B cell (primary cell): ENCODE measurements at regions of chr12 and their contacts with region 1.

Region 1: DNA sequence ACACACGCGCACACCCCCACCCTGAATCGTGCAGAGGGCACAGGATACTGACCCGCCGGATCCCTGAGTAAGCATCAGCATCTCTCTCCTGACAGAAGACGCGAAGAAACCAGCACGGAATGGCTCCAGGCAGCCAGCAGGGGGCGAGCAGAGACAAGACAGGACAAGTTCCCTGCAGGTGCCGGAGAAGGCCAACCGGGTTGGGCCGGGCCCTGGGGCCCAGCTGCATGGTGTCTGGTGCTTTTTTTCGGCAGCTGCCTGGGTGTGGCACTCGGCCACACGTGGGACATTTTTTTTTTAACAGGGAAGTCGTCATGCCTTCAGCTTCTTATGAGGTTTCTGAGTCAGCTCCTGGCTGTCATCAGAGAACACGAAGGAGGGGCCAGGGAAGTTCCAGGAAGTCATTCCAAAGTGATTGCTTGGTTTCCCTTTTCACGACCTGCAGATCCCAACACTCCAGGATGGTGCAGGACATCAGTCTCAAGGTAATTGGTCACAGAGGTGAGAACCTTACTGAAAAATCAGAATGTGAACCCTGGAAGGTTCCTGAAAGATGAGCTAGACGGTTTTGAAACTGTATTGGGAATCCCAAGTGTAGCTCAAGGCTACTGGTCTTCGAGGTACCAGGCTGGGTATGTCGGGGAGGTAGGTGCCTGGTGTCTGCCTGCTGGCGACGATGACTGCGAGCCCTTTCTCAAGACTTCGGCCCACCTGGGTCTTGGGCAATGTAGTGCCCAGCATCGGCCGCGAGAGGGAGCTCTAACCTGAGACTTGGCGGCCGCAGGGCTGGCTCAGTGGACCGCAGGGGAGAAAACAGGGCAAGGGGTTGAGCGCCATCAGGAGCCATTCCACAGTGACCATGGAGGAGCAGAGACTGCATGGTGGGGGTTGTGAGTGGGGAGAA is 190.8 kb upstream of the PRMT8 start:
- DNase-seq: peak; percentile 89
- ATAC-seq: peak; percentile 90
- H3K4me3 ChIP-seq: peak overlapping the region in 3 of 5 experiments; percentile 35 to 50 (median 39)
- H3K4me3 Mint-ChIP-seq: peak overlapping the region; percentile 79
- H3K27ac ChIP-seq: no peak overlapping the region
- H3K27ac Mint-ChIP-seq: peak overlapping the region; percentile 67
- H3K4me1 ChIP-seq: peaks cover 9 to 16% of the 10 kb centered on the region in 2 donors
- H3K4me1 Mint-ChIP-seq: peaks cover 13% of the 10 kb centered on the region
- H3K27me3 ChIP-seq: peaks cover 0 to 18% (median 0%) of the 10 kb centered on the region in 4 experiments
- H3K27me3 Mint-ChIP-seq: peaks cover 19% of the 10 kb centered on the region
- CTCF ChIP-seq: peak; percentile 81

Region 2: GRCh38 chr12:3275171-3276041 is 24.8 kb before region 1 on chr12:
- CTCF ChIA-PET with region 1: interaction called, 10 read pairs
- POLR2A ChIA-PET with region 1: no interaction called
- intact Hi-C with region 1: no loop called
- DNase-seq: peak; percentile 71
- ATAC-seq: peak; percentile 54
- H3K4me3 ChIP-seq: no peak overlapping the region
- H3K4me3 Mint-ChIP-seq: no peak overlapping the region
- H3K27ac ChIP-seq: no peak overlapping the region
- H3K27ac Mint-ChIP-seq: no peak overlapping the region
- H3K4me1 ChIP-seq: peaks cover 0 to 4% of the 10 kb centered on the region in 2 donors
- H3K4me1 Mint-ChIP-seq: no peaks in the 10 kb centered on the region
- H3K27me3 ChIP-seq: peaks cover 0 to 9% (median 0%) of the 10 kb centered on the region in 4 experiments
- H3K27me3 Mint-ChIP-seq: peaks cover 27% of the 10 kb centered on the region
- CTCF ChIP-seq: peak; percentile 90

Region 3: GRCh38 chr12:3313675-3314663 is 13.8 kb after region 1 on chr12:
- CTCF ChIA-PET with region 1: interaction called, 39 read pairs
- POLR2A ChIA-PET with region 1: no interaction called
- intact Hi-C with region 1: no loop called
- DNase-seq: peak; percentile 47
- ATAC-seq: peak; percentile 43
- H3K4me3 ChIP-seq: no peak overlapping the region
- H3K4me3 Mint-ChIP-seq: no peak overlapping the region
- H3K27ac ChIP-seq: no peak overlapping the region
- H3K27ac Mint-ChIP-seq: no peak overlapping the region
- H3K4me1 ChIP-seq: no peaks in the 10 kb centered on the region
- H3K4me1 Mint-ChIP-seq: no peaks in the 10 kb centered on the region
- H3K27me3 ChIP-seq: peaks cover 0 to 3% (median 0%) of the 10 kb centered on the region in 4 experiments
- H3K27me3 Mint-ChIP-seq: peaks cover 24% of the 10 kb centered on the region
- CTCF ChIP-seq: peak; percentile 19

Region 4: DNA sequence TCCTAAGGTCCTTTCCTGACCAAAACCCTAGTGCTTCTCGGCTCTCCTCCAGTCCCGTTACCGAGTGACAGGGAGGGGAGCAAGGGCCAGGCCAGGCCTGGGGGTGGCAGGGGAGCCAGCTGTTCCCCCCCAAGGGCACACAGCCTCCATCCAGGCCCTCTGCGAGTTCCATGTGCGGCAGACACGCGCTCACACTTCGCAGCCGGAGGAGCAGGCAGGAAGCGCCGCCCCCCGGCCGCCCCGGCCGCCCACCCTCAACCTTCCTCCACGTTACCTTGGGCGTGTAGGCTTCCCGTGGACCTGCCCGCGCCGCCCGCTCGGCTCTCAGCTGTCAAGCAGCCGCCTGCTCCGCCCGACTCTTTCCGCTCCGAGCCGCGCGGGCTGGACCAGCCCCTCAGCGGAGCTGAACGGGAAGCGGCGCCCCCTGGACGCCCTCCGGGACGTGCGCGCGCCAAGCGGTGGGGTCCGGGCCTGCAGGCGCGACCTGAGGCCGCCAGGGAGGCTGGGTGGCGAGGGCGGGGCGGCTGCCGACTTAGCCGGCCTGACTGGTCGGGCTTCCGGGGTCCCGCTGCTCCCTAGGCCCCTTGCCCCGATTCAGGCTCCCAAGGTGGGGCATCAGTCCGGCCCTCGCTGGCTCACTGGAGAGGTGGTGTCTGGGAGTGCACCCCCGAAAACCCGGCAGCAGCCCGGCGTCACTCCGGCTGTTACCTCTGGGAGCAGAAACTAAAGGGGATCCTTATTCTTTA is 452.7 kb after region 1 on chr12 and contains the start of gene CRACR2A:
- CTCF ChIA-PET with region 1: interaction called, 5 read pairs
- POLR2A ChIA-PET with region 1: no interaction called
- intact Hi-C with region 1: loop called (anchors 1 kb)
- DNase-seq: peak; percentile 89
- ATAC-seq: peak; percentile 88
- H3K4me3 ChIP-seq: peak within 1 kb of the TSS; percentile 68 to 98 (median 82)
- H3K4me3 Mint-ChIP-seq: peak within 1 kb of the TSS; percentile 92
- H3K27ac ChIP-seq: peak within 1 kb of the TSS; percentile 92 to 95
- H3K27ac Mint-ChIP-seq: peak within 1 kb of the TSS; percentile 91
- H3K4me1 ChIP-seq: peaks cover 20 to 29% of the 10 kb centered on the region in 2 donors
- H3K4me1 Mint-ChIP-seq: peaks cover 34% of the 10 kb centered on the region
- H3K27me3 ChIP-seq: no peaks in the 10 kb centered on the region
- H3K27me3 Mint-ChIP-seq: no peaks in the 10 kb centered on the region
- CTCF ChIP-seq: peak; percentile 86
- total RNA-seq, gene CRACR2A: 26.1 and 26.8 TPM in 2 replicates

Region 5: GRCh38 chr12:3797531-3798049 is 497.4 kb after region 1 on chr12:
- CTCF ChIA-PET with region 1: interaction called, 39 read pairs
- POLR2A ChIA-PET with region 1: no interaction called
- intact Hi-C with region 1: no loop called
- DNase-seq: no peak
- ATAC-seq: no peak
- H3K4me3 ChIP-seq: no peak overlapping the region
- H3K4me3 Mint-ChIP-seq: no peak overlapping the region
- H3K27ac ChIP-seq: no peak overlapping the region
- H3K27ac Mint-ChIP-seq: no peak overlapping the region
- H3K4me1 ChIP-seq: no peaks in the 10 kb centered on the region
- H3K4me1 Mint-ChIP-seq: no peaks in the 10 kb centered on the region
- H3K27me3 ChIP-seq: no peaks in the 10 kb centered on the region
- H3K27me3 Mint-ChIP-seq: no peaks in the 10 kb centered on the region
- CTCF ChIP-seq: no peak